Activated CD8-positive, alpha-beta memory T cell treated with anti-CD3 and anti-CD28 coated beads, Interleukin-2, amount 10 ng/mL, durations not matched to agents 7 days and 5 days (primary cell): ENCODE measurements at regions of chr21 and their contacts with region 1.

Region 1: GRCh38 chr21:33348706-33349105 is 23.9 kb downstream of the IFNAR1 start:
- DNase-seq: no peak
- ATAC-seq: no peak
- H3K4me3 Mint-ChIP-seq: no peak overlapping the region
- H3K27ac Mint-ChIP-seq: no peak overlapping the region
- H3K4me1 Mint-ChIP-seq: peaks cover 3% of the 10 kb centered on the region
- H3K27me3 Mint-ChIP-seq: no peaks in the 10 kb centered on the region

Region 2: GRCh38 chr21:33317145-33317544 is 31.6 kb before region 1 on chr21:
- CTCF ChIA-PET with region 1: no interaction called
- DNase-seq: no peak
- ATAC-seq: no peak
- H3K4me3 Mint-ChIP-seq: no peak overlapping the region
- H3K27ac Mint-ChIP-seq: no peak overlapping the region
- H3K4me1 Mint-ChIP-seq: no peaks in the 10 kb centered on the region
- H3K27me3 Mint-ChIP-seq: peaks cover 24% of the 10 kb centered on the region

Region 3: DNA sequence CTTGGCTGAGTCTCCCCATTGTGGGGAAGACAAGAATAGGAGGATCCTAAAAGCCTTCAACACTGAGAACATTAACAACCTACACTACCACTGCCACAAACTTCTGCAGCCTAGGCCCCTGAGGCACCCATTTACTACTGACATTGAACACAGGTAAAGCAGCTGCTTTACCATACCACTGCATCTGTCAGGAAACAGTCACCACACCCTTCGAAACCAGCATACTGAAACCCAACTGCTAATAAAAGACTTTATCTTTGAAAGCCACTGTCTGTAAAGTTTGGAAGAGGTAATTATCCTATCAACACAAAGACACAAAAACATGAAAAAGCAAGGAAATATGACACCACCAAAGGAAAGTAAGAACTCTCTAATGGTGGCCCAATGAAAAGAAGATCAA is 16.6 kb before region 1 on chr21:
- CTCF ChIA-PET with region 1: interaction called, 10 read pairs
- DNase-seq: peak; percentile 57
- ATAC-seq: peak; percentile 72
- H3K4me3 Mint-ChIP-seq: peak overlapping the region; percentile 8
- H3K27ac Mint-ChIP-seq: peak overlapping the region; percentile 62
- H3K4me1 Mint-ChIP-seq: peaks cover 39% of the 10 kb centered on the region
- H3K27me3 Mint-ChIP-seq: no peaks in the 10 kb centered on the region